ENCODE measurements at regions of chr10 and their contacts with region 1.

Region 1: DNA sequence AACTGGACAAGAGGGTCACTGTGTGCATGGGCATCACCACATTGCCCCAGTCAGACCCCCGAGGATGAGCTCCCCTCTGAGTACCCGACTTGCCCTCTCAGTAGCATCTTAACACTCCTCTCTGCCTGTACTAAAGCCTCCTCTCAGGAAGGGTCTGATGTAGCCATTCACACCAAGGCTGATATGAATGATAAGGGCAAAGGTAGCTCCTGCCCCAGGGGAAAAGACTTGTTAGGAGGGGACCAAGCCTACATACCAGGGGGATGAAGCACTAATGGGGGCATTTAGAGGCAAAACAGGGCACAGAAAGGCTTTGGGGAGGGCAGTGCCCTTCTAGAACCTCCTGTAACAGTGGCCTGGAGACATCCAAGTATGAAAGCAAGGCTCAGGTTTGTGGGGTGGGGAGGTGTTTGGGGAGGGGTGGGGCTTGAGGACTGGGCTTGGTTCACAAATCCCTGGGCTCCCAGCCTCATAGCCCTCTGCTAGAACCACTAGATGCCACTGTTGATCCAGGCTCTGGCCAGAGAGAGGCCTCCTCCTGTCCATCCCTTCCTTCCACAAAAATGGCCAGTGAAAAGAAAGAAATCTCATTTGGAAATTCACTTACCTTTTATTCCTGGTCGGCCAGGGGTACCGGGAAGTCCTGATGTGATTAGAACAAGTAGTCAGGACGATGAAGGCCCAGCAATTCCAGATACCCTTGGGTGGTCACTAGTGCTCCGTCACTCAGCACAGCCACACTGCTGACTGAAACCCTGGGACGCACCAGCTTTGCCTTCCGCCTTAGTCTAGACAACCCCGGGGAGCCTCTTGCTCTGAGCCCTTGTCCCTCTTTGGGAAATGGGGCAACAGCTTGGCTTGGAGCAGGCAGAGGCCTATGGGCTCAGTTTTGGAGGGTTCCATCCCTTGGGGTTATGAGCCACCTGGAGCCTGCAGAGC is 40.3 kb downstream of the COL17A1 start:
- DNase-seq: peak; percentile 46 to 79
- H3K4me3 ChIP-seq: no peak overlapping the region
- H3K27ac ChIP-seq: no peak overlapping the region
- H3K4me1 ChIP-seq: peaks cover 0 to 17% (median 6%) of the 10 kb centered on the region in 4 donors
- H3K27me3 ChIP-seq: no peaks in the 10 kb centered on the region
- CTCF ChIP-seq: peak in 4 of 7 experiments; percentile 19 to 44 (median 28)
- EP300 ChIP-seq: no peak
- POLR2A ChIP-seq: no peak

Region 2: DNA sequence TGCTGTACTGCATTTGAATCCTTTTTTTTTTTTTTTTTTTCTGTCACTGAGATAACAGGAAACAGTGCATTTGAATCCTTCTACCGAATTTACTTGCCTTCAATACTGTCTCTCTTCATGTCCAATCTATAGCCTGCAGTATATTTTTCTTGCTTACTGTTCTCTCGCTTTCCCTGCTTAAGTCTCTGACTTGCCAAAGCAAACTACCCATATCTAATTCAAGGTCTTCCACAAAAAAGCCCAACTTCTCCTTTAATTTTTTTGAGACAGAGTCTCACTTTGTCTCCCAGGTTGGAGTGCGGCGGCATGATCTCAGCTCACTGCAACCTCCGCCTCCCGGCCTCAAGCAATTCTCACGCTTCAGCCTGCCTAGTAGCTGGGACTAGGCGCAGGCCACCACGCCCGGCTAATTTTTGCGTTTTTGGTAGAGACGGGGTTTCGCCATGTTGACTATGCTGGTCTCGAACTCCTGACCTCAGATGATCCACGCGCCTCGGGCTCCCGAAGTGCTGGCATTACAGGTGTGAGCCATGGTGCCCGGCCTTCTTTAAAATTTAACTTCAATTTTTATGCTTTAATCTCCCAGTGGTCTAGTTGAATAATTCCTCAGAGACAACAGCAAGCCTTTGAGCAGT is 648.1 kb before region 1 on chr10:
- intact Hi-C with region 1: no loop called
- DNase-seq: peak in 1 of 2 donors; percentile 6
- H3K4me3 ChIP-seq: peak overlapping the region; percentile 78 to 96 (median 89)
- H3K27ac ChIP-seq: peak overlapping the region in 1 of 5 donors; percentile 89
- H3K4me1 ChIP-seq: peaks cover 25 to 53% (median 43%) of the 10 kb centered on the region in 4 donors
- H3K27me3 ChIP-seq: no peaks in the 10 kb centered on the region
- CTCF ChIP-seq: no peak
- EP300 ChIP-seq: no peak
- POLR2A ChIP-seq: no peak

Region 3: DNA sequence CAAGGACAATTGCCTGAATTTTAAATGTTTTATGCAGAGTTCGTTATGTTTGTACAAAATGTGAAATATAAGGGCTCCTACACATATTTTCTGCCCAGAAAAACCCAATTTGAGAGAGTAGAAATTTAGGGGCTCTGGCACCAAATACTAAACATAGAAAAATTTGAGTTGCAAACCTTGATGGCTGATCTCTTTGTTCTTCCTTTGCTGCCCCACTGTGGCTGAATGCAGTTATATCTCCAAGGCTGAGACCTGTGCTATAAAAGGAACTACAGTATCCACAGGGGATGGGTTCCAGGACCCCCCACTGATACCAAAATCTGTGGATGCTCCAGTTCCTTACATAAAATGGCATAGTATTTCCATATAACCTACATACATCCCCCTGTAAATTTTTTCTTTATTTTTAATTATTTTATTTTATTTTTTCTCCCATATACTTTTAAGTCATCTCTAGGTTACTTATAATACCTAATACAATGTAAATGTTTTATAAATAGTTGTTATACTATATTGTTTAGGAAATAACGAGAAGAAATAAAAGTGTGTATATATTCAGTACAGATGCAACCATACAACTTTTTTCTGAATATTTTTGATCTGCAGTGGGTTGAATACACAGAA is 164.3 kb after region 1 on chr10:
- intact Hi-C with region 1: loop called (anchors 10 kb)
- DNase-seq: peak in 1 of 2 donors; percentile 78
- H3K4me3 ChIP-seq: no peak overlapping the region
- H3K27ac ChIP-seq: no peak overlapping the region
- H3K4me1 ChIP-seq: no peaks in the 10 kb centered on the region
- H3K27me3 ChIP-seq: no peaks in the 10 kb centered on the region
- CTCF ChIP-seq: peak in 5 of 7 experiments; percentile 16 to 46 (median 42)
- EP300 ChIP-seq: no peak
- POLR2A ChIP-seq: no peak